ENCODE measurements at regions of chr1 and their contacts with region 1.

Region 1: GRCh38 chr1:236685917-236686814 is at the start of gene ACTN2:
- DNase-seq: peak; percentile 31
- H3K4me3 ChIP-seq: peak within 1 kb of the TSS; percentile 19 to 62 (median 44)
- H3K27ac ChIP-seq: no peak within 1 kb of the TSS
- H3K4me1 ChIP-seq: peaks cover 7% of the 10 kb centered on the region
- H3K27me3 ChIP-seq: peaks cover 3 to 5% of the 10 kb centered on the region in 2 experiments
- CTCF ChIP-seq: no peak
- POLR2A ChIP-seq: no peak
- total RNA-seq, gene ACTN2: 0.28 and 0.55 TPM in 2 replicates

Region 2: DNA sequence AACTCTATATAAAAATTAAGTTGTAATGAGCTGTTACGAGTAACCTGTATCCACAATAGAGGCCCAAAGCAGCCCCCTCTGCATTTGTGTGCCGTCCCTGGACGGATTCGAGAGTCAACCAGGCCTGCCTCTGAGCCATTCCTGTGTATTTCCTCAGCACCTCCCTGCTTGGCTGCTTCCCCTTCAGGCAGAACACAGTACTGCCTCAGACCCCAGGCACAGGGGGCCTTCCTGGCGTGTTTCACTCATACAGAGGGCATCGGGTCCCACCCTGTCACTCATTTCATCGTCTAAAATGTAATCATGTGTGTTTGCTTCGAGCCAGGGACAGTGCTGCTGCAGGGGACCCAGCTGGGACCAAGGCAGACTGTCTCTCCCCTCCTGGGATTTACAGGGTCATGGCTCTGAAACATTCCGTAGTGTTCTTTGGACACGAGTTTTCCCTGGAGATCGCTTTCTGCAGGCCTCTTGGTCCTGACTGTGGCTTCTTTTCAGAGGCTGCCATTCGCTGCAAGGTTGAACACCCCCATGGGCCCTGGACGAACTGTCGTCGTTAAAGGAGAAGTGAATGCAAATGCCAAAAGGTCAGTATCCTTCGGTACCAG is 143.0 kb before region 1 on chr1:
- CTCF ChIA-PET with region 1: no interaction called
- POLR2A ChIA-PET with region 1: no interaction called
- dilution Hi-C with region 1: no loop called
- intact Hi-C with region 1: no loop called
- DNase-seq: no peak
- H3K4me3 ChIP-seq: no peak overlapping the region
- H3K27ac ChIP-seq: no peak overlapping the region
- H3K4me1 ChIP-seq: no peaks in the 10 kb centered on the region
- H3K27me3 ChIP-seq: no peaks in the 10 kb centered on the region
- CTCF ChIP-seq: peak in 1 of 2 donors; percentile 7
- POLR2A ChIP-seq: no peak

Region 3: GRCh38 chr1:236560213-236560786 is 125.9 kb before region 1 on chr1:
- CTCF ChIA-PET with region 1: no interaction called
- POLR2A ChIA-PET with region 1: no interaction called
- dilution Hi-C with region 1: no loop called
- intact Hi-C with region 1: no loop called
- DNase-seq: no peak
- H3K4me3 ChIP-seq: no peak overlapping the region
- H3K27ac ChIP-seq: no peak overlapping the region
- H3K4me1 ChIP-seq: no peaks in the 10 kb centered on the region
- H3K27me3 ChIP-seq: no peaks in the 10 kb centered on the region
- CTCF ChIP-seq: peak in 1 of 2 donors; percentile 14
- POLR2A ChIP-seq: no peak

Region 4: GRCh38 chr1:236623371-236624166 is 62.6 kb before region 1 on chr1:
- CTCF ChIA-PET with region 1: no interaction called
- POLR2A ChIA-PET with region 1: no interaction called
- dilution Hi-C with region 1: no loop called
- intact Hi-C with region 1: loop called (anchors 5 kb)
- DNase-seq: peak; percentile 62
- H3K4me3 ChIP-seq: no peak overlapping the region
- H3K27ac ChIP-seq: peak overlapping the region; percentile 29
- H3K4me1 ChIP-seq: peaks cover 14% of the 10 kb centered on the region
- H3K27me3 ChIP-seq: no peaks in the 10 kb centered on the region
- CTCF ChIP-seq: no peak
- POLR2A ChIP-seq: no peak

Region 5: DNA sequence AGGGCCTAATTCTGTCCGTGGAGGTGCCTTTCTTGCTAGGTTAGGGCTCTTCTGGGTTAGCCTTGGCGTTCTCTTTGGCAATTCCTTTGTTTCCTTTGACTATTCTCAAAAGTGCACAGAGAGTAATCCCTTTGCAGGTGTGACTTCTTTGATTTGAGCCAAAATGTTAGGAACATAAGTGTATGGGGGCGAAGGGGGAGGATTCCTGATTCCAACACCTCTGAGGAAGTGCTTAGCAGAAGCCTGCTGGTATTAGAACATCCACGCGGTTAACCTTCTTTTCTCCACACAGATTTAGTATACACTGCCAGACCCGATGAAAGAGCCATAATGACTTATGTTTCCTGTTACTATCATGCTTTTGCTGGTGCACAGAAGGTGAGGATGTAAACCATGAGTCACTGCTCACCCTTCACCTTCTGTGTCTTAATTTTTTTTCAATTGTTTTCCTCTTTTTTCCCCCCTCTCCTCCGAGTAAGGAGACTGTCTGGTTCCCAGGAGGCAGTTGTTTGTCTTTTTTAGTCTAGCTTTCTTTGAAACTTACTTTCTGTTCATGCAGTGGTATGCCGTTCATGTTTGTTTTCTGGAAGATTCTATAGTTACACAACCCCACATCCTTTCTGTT is 48.1 kb after region 1 on chr1:
- CTCF ChIA-PET with region 1: no interaction called
- POLR2A ChIA-PET with region 1: no interaction called
- dilution Hi-C with region 1: no loop called
- intact Hi-C with region 1: loop called (anchors 1 kb)
- DNase-seq: peak; percentile 95
- H3K4me3 ChIP-seq: peak overlapping the region in 1 of 3 experiments; percentile 15
- H3K27ac ChIP-seq: peak overlapping the region; percentile 52
- H3K4me1 ChIP-seq: peaks cover 16% of the 10 kb centered on the region
- H3K27me3 ChIP-seq: no peaks in the 10 kb centered on the region
- CTCF ChIP-seq: no peak
- POLR2A ChIP-seq: peak; percentile 39